Activated CD4-positive, alpha-beta memory T cell treated with anti-CD3 and anti-CD28 coated beads, Interleukin-2, amount 10 ng/mL, durations not matched to agents 7 days and 5 days (primary cell): ENCODE measurements at regions of chr21 and their contacts with region 1.

Region 1: DNA sequence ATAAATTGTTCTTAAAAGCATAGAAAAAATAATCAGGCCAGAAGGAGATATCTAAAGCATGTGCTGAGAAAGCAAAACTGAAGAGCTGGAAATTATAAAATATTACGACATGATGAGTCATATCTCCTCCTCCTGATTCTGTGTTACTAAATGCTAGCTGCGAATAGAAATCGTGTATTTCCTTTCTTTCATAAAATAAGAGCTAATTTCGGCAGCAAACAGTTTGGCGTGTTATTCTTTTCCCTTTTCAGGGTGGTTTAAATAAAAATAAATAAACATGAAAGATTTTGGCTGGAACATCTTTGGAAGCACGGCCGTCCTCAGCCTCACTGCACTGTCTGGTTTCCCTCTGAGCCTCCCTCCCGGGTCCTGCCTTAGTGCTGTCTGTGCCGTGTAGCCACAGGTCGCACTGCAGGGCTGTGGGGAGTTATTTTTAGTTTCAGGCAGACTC is 56.0 kb downstream of the ADARB1 start:
- DNase-seq: no peak
- H3K4me3 Mint-ChIP-seq: no peak overlapping the region
- H3K27ac Mint-ChIP-seq: no peak overlapping the region
- H3K4me1 Mint-ChIP-seq: peaks cover 21% of the 10 kb centered on the region
- H3K27me3 Mint-ChIP-seq: no peaks in the 10 kb centered on the region

Region 2: GRCh38 chr21:44939532-44940115 is 190.7 kb before region 1 on chr21 and contains the start of gene SLX9:
- CTCF ChIA-PET with region 1: interaction called, 150 read pairs
- POLR2A ChIA-PET with region 1: interaction called, 4 read pairs
- DNase-seq: peak; percentile 81
- H3K4me3 Mint-ChIP-seq: peak within 1 kb of the TSS; percentile 86
- H3K27ac Mint-ChIP-seq: peak within 1 kb of the TSS; percentile 73
- H3K4me1 Mint-ChIP-seq: peaks cover 53% of the 10 kb centered on the region
- H3K27me3 Mint-ChIP-seq: no peaks in the 10 kb centered on the region
- total RNA-seq, gene SLX9: 42.4 to 47.0 TPM

Region 3: GRCh38 chr21:44962403-44962966 is 167.9 kb before region 1 on chr21:
- CTCF ChIA-PET with region 1: interaction called, 22 read pairs
- POLR2A ChIA-PET with region 1: no interaction called
- DNase-seq: no peak
- H3K4me3 Mint-ChIP-seq: no peak overlapping the region
- H3K27ac Mint-ChIP-seq: no peak overlapping the region
- H3K4me1 Mint-ChIP-seq: peaks cover 29% of the 10 kb centered on the region
- H3K27me3 Mint-ChIP-seq: no peaks in the 10 kb centered on the region

Region 4: DNA sequence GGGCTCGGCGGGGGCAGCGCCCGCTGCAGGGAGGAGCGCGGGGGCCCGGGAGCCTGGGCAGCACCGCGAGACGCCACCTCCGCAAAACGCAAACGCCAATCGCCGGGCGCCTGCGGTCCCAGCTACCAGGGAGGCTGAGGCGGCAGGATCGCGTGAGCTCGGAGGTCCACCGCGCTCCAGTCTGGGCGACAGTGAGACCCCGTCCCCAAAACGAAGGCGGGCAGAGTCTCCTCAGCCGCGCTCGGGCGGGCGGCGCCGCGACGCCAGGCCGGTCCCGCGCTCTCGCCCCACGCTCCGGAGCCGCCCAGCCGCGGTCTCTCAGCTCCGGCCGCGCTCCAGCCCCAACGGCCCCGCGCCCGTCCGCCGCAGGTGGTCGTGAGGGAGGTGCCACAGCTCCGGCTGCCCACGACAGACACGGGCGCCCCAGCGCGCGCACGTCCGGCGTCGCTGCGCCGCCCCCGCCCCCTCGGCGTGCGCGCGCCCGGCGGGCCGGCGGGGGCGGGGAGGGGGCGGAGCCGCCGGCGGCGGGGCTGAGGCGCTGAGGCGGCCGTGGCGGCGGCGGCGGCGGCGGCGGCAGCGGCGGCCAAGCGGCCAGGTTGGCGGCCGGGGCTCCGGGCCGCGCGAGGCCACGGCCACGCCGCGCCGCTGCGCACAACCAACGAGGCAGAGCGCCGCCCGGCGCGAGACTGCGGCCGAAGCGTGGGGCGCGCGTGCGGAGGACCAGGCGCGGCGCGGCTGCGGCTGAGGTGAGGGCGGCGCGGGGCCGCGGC is 56.1 kb before region 1 on chr21 and contains the start of gene ADARB1:
- CTCF ChIA-PET with region 1: interaction called, 45 read pairs
- POLR2A ChIA-PET with region 1: interaction called, 7 read pairs
- DNase-seq: peak; percentile 65
- H3K4me3 Mint-ChIP-seq: peak within 1 kb of the TSS; percentile 90
- H3K27ac Mint-ChIP-seq: peak within 1 kb of the TSS; percentile 72
- H3K4me1 Mint-ChIP-seq: peaks cover 42% of the 10 kb centered on the region
- H3K27me3 Mint-ChIP-seq: no peaks in the 10 kb centered on the region
- total RNA-seq, gene ADARB1: 59.1 to 59.6 TPM

Region 5: GRCh38 chr21:45104560-45104959 is 25.8 kb before region 1 on chr21:
- CTCF ChIA-PET with region 1: interaction called, 22 read pairs
- POLR2A ChIA-PET with region 1: no interaction called
- DNase-seq: no peak
- H3K4me3 Mint-ChIP-seq: no peak overlapping the region
- H3K27ac Mint-ChIP-seq: no peak overlapping the region
- H3K4me1 Mint-ChIP-seq: peaks cover 51% of the 10 kb centered on the region
- H3K27me3 Mint-ChIP-seq: no peaks in the 10 kb centered on the region